ENCODE measurements at regions of chr4 and their contacts with region 1.

Region 1: GRCh38 chr4:173257732-173258717 is 76.1 kb downstream of the HMGB2 start:
- DNase-seq: no peak
- H3K4me3 ChIP-seq: no peak overlapping the region
- H3K27ac ChIP-seq: no peak overlapping the region
- H3K4me1 ChIP-seq: no peaks in the 10 kb centered on the region
- H3K27me3 ChIP-seq: no peaks in the 10 kb centered on the region
- CTCF ChIP-seq: peak in 5 of 6 experiments; percentile 51 to 73 (median 65)
- POLR2A ChIP-seq: no peak

Region 2: GRCh38 chr4:173019711-173020110 is 238.3 kb before region 1 on chr4:
- intact Hi-C with region 1: loop called (anchors 5 kb)
- DNase-seq: no peak
- H3K4me3 ChIP-seq: no peak overlapping the region
- H3K27ac ChIP-seq: no peak overlapping the region
- H3K4me1 ChIP-seq: peaks cover 0 to 14% (median 3%) of the 10 kb centered on the region in 3 donors
- H3K27me3 ChIP-seq: peaks cover 0 to 3% (median 0%) of the 10 kb centered on the region in 4 donors
- CTCF ChIP-seq: no peak
- POLR2A ChIP-seq: no peak

Region 3: DNA sequence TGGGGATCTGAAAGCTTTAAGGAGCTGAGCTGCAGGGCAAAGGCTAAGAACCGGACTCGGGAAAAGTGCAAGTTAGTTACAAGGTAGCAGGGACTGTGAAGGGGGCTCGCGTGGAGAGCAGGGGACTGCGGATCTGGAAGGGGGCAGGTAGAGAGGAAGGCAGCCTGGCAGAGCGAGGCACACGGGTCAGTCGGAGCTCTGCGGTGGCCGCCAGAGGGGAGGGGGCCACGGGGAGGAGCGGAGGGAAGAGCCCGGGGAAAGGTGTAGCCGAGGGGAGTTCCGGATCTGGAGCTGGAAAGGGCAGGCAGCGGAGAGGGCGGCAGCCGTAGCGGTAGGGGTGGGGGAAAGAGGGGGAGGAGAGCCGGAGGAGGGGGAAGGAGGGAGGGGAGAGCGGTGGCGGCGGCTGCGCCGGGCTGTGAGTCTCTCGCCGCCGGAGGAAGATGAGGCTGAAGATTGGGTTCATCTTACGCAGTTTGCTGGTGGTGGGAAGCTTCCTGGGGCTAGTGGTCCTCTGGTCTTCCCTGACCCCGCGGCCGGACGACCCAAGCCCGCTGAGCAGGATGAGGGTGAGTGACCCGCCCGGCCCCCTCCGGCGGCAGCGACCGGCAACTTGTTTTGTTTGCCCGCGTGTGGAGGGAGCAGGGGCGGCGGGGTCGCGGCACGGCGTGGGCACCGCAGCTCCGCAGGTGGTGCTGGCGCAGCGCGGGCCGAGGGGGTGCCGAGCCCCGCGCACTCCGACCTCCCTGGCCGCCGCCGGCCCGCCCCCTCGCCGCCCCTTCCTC is 89.4 kb before region 1 on chr4 and contains the start of gene GALNT7:
- intact Hi-C with region 1: loop called (anchors 10 kb)
- DNase-seq: peak; percentile 6
- H3K4me3 ChIP-seq: peak within 1 kb of the TSS; percentile 81 to 99 (median 92)
- H3K27ac ChIP-seq: peak within 1 kb of the TSS; percentile 92 to 96 (median 94)
- H3K4me1 ChIP-seq: peaks cover 8 to 49% (median 18%) of the 10 kb centered on the region in 3 donors
- H3K27me3 ChIP-seq: no peaks in the 10 kb centered on the region
- CTCF ChIP-seq: no peak
- POLR2A ChIP-seq: no peak
- total RNA-seq, gene GALNT7: 17.9 to 33.8 (median 23.6) TPM

Region 4: GRCh38 chr4:173522123-173522950 is 264.3 kb after region 1 on chr4:
- intact Hi-C with region 1: no loop called
- DNase-seq: no peak
- H3K4me3 ChIP-seq: peak overlapping the region; percentile 2 to 61 (median 36)
- H3K27ac ChIP-seq: peak overlapping the region; percentile 9 to 74 (median 56)
- H3K4me1 ChIP-seq: peaks cover 4 to 47% (median 29%) of the 10 kb centered on the region in 3 donors
- H3K27me3 ChIP-seq: peaks cover 26 to 100% (median 61%) of the 10 kb centered on the region in 4 donors
- CTCF ChIP-seq: no peak
- POLR2A ChIP-seq: no peak